ENCODE measurements at regions of chr17 and their contacts with region 1.

Region 1: GRCh38 chr17:51260125-51260880 is at the start of gene UTP18:
- DNase-seq: peak; percentile 97
- H3K4me3 ChIP-seq: peak within 1 kb of the TSS; percentile 70 to 99 (median 88)
- H3K27ac ChIP-seq: peak within 1 kb of the TSS; percentile 99
- H3K4me1 ChIP-seq: peaks cover 19% of the 10 kb centered on the region
- H3K27me3 ChIP-seq: no peaks in the 10 kb centered on the region
- CTCF ChIP-seq: no peak
- POLR2A ChIP-seq: no peak
- total RNA-seq, gene UTP18: 29.3 and 32.2 TPM in 2 replicates

Region 2: GRCh38 chr17:51166197-51166986 is 93.9 kb before region 1 on chr17 and contains the start of gene NME2:
- CTCF ChIA-PET with region 1: interaction called, 3 read pairs
- POLR2A ChIA-PET with region 1: no interaction called
- dilution Hi-C with region 1: no loop called
- intact Hi-C with region 1: loop called (anchors 1 kb)
- DNase-seq: peak; percentile 79
- H3K4me3 ChIP-seq: peak within 1 kb of the TSS; percentile 45 to 63 (median 55)
- H3K27ac ChIP-seq: peak within 1 kb of the TSS; percentile 67
- H3K4me1 ChIP-seq: peaks cover 16% of the 10 kb centered on the region
- H3K27me3 ChIP-seq: no peaks in the 10 kb centered on the region
- CTCF ChIP-seq: peak in 1 of 2 donors; percentile 6
- POLR2A ChIP-seq: peak; percentile 74
- total RNA-seq, gene NME2: 555 and 565 TPM in 2 replicates

Region 3: GRCh38 chr17:51224402-51225262 is 35.7 kb before region 1 on chr17:
- CTCF ChIA-PET with region 1: interaction called, 3 read pairs
- POLR2A ChIA-PET with region 1: no interaction called
- dilution Hi-C with region 1: no loop called
- intact Hi-C with region 1: loop called (anchors 1 kb)
- DNase-seq: peak; percentile 72
- H3K4me3 ChIP-seq: peak overlapping the region in 2 of 3 experiments; percentile 9 to 48
- H3K27ac ChIP-seq: peak overlapping the region; percentile 57
- H3K4me1 ChIP-seq: peaks cover 20% of the 10 kb centered on the region
- H3K27me3 ChIP-seq: no peaks in the 10 kb centered on the region
- CTCF ChIP-seq: no peak
- POLR2A ChIP-seq: no peak

Region 4: GRCh38 chr17:51279183-51279582 is 18.9 kb after region 1 on chr17:
- CTCF ChIA-PET with region 1: no interaction called
- POLR2A ChIA-PET with region 1: no interaction called
- dilution Hi-C with region 1: no loop called
- intact Hi-C with region 1: no loop called
- DNase-seq: no peak
- H3K4me3 ChIP-seq: no peak overlapping the region
- H3K27ac ChIP-seq: no peak overlapping the region
- H3K4me1 ChIP-seq: no peaks in the 10 kb centered on the region
- H3K27me3 ChIP-seq: no peaks in the 10 kb centered on the region
- CTCF ChIP-seq: no peak
- POLR2A ChIP-seq: no peak